GM12878 (cell line): ENCODE measurements at regions of chr17 and their contacts with region 1.

Region 1: GRCh38 chr17:40474419-40475002 is 26.9 kb downstream of the TNS4 start:
- DNase-seq: no peak
- ATAC-seq: no peak
- H3K4me3 ChIP-seq: no peak overlapping the region
- H3K27ac ChIP-seq: no peak overlapping the region
- H3K4me1 ChIP-seq: no peaks in the 10 kb centered on the region
- H3K27me3 ChIP-seq: no peaks in the 10 kb centered on the region
- CTCF ChIP-seq: no peak
- EP300 ChIP-seq: no peak
- POLR2A ChIP-seq: no peak
- RAD21 ChIP-seq: no peak

Region 2: DNA sequence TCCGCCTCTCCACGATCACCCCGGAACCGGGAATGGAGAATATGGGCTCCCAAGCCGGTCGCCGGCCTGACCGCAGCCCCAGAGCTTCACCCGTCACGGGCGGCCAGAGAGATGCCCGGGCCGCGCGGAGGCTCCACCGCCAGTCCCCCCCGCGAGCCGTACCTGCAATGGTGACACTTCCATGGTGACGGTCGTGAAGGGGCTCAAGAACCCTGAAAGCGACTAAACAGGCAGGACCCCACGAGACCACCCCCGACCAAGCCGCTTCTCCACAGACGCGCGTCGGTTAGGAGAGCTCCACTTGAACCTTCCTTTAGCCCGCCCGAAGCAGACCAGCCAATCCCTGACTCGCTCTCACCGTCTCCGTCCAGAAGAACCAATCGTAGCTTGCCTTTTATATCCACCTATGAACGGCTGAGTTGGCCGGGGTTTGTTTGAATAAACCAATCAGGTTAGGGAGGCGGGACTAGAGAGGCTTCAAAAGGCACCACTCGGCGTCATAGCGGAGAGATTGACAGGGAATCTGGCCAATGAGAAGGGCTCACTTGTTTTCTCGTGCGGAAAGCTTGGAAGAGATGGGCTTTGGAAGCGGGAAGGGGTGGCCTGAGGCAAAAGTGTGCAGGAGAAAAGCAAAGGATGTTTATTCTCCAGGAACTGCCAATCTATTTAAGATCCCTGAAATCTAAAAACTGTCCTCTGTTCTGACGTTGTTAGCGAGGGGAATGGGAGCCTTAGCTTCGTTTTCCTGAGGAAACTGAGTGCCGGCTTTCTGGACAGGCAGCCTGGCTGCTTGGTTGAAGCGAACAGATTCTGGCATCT is 56.7 kb before region 1 on chr17 and contains the start of gene TOP2A:
- CTCF ChIA-PET with region 1: interaction called, 31 read pairs
- POLR2A ChIA-PET with region 1: no interaction called
- RAD21 ChIA-PET with region 1: interaction called, 7 read pairs
- SMC1A ChIA-PET with region 1: interaction called, 4 read pairs
- in situ Hi-C with region 1: no loop called
- intact Hi-C with region 1: no loop called
- DNase-seq: peak; percentile 99
- ATAC-seq: peak; percentile 97
- H3K4me3 ChIP-seq: peak within 1 kb of the TSS; percentile 94
- H3K27ac ChIP-seq: peak within 1 kb of the TSS; percentile 62
- H3K4me1 ChIP-seq: no peaks in the 10 kb centered on the region; the same call in 1 of the 2 replicates
- H3K27me3 ChIP-seq: no peaks in the 10 kb centered on the region; a peak in 1 of 4 replicates
- CTCF ChIP-seq: no peak
- EP300 ChIP-seq: no peak
- POLR2A ChIP-seq: peak; percentile 91
- RAD21 ChIP-seq: no peak
- polyA plus RNA-seq, gene TOP2A: 149 to 236 TPM

Region 3: DNA sequence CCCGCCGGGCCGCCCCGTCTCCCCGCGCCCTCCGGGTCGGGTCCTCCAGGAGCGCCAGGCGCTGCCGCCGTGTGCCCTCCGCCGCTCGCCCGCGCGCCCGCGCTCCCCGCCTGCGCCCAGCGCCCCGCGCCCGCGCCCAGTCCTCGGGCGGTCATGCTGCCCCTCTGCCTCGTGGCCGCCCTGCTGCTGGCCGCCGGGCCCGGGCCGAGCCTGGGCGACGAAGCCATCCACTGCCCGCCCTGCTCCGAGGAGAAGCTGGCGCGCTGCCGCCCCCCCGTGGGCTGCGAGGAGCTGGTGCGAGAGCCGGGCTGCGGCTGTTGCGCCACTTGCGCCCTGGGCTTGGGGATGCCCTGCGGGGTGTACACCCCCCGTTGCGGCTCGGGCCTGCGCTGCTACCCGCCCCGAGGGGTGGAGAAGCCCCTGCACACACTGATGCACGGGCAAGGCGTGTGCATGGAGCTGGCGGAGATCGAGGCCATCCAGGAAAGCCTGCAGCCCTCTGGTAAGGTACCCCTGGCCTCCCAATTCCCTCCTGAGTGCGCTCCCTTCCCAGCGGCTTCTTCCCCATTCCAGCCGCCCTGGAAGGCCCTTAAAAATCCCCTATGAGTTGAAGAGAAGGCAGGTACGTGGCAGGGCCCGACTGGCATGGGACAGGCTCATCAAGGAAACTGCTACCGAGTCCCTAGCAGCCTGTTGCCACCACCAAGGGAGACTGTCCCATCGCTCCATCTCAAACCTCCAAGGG is 30.8 kb before region 1 on chr17:
- CTCF ChIA-PET with region 1: interaction called, 61 read pairs
- POLR2A ChIA-PET with region 1: interaction called, 5 read pairs
- RAD21 ChIA-PET with region 1: interaction called, 13 read pairs
- SMC1A ChIA-PET with region 1: interaction called, 14 read pairs
- in situ Hi-C with region 1: no loop called
- intact Hi-C with region 1: no loop called
- DNase-seq: no peak
- ATAC-seq: peak; percentile 84
- H3K4me3 ChIP-seq: peak overlapping the region; percentile 61
- H3K27ac ChIP-seq: no peak overlapping the region
- H3K4me1 ChIP-seq: peaks cover 19% of the 10 kb centered on the region
- H3K27me3 ChIP-seq: peaks cover 0 to 16% of the 10 kb centered on the region in 2 experiments; a peak in 1 of 4 replicates
- CTCF ChIP-seq: peak; percentile 46 to 72 (median 71)
- EP300 ChIP-seq: no peak
- POLR2A ChIP-seq: no peak
- RAD21 ChIP-seq: peak; percentile 33; the same call in 1 of the 2 replicates

Region 4: DNA sequence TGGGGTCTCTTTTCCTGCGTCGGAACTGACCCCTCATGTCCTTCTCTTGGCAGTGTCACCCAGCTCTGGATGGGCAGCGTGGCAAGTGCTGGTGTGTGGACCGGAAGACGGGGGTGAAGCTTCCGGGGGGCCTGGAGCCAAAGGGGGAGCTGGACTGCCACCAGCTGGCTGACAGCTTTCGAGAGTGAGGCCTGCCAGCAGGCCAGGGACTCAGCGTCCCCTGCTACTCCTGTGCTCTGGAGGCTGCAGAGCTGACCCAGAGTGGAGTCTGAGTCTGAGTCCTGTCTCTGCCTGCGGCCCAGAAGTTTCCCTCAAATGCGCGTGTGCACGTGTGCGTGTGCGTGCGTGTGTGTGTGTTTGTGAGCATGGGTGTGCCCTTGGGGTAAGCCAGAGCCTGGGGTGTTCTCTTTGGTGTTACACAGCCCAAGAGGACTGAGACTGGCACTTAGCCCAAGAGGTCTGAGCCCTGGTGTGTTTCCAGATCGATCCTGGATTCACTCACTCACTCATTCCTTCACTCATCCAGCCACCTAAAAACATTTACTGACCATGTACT is 18.0 kb before region 1 on chr17:
- CTCF ChIA-PET with region 1: interaction called, 15 read pairs
- POLR2A ChIA-PET with region 1: no interaction called
- RAD21 ChIA-PET with region 1: interaction called, 3 read pairs
- SMC1A ChIA-PET with region 1: interaction called, 3 read pairs
- in situ Hi-C with region 1: no loop called
- intact Hi-C with region 1: no loop called
- DNase-seq: no peak
- ATAC-seq: no peak
- H3K4me3 ChIP-seq: no peak overlapping the region
- H3K27ac ChIP-seq: no peak overlapping the region
- H3K4me1 ChIP-seq: no peaks in the 10 kb centered on the region
- H3K27me3 ChIP-seq: no peaks in the 10 kb centered on the region
- CTCF ChIP-seq: no peak
- EP300 ChIP-seq: no peak
- POLR2A ChIP-seq: no peak
- RAD21 ChIP-seq: no peak

Region 5: GRCh38 chr17:40516581-40517285 is 42.2 kb after region 1 on chr17:
- CTCF ChIA-PET with region 1: interaction called, 38 read pairs
- POLR2A ChIA-PET with region 1: interaction called, 6 read pairs
- RAD21 ChIA-PET with region 1: interaction called, 17 read pairs
- SMC1A ChIA-PET with region 1: interaction called, 14 read pairs
- in situ Hi-C with region 1: no loop called
- intact Hi-C with region 1: no loop called
- DNase-seq: peak; percentile 60
- ATAC-seq: peak; percentile 91
- H3K4me3 ChIP-seq: peak overlapping the region; percentile 38; the same call in 1 of the 2 replicates
- H3K27ac ChIP-seq: peak overlapping the region; percentile 64
- H3K4me1 ChIP-seq: peaks cover 18% of the 10 kb centered on the region
- H3K27me3 ChIP-seq: no peaks in the 10 kb centered on the region; a peak in 1 of 4 replicates
- CTCF ChIP-seq: no peak
- EP300 ChIP-seq: peak; percentile 44 to 60; a peak in 3 of 4 replicates
- POLR2A ChIP-seq: no peak
- RAD21 ChIP-seq: no peak

Region 6: GRCh38 chr17:40707720-40708119 is 233.2 kb after region 1 on chr17:
- CTCF ChIA-PET with region 1: no interaction called
- POLR2A ChIA-PET with region 1: no interaction called
- RAD21 ChIA-PET with region 1: no interaction called
- SMC1A ChIA-PET with region 1: no interaction called
- in situ Hi-C with region 1: no loop called
- intact Hi-C with region 1: no loop called
- DNase-seq: no peak
- ATAC-seq: no peak
- H3K4me3 ChIP-seq: no peak overlapping the region
- H3K27ac ChIP-seq: no peak overlapping the region
- H3K4me1 ChIP-seq: no peaks in the 10 kb centered on the region
- H3K27me3 ChIP-seq: peaks cover 0 to 2% of the 10 kb centered on the region in 2 experiments; a peak in 1 of 4 replicates
- CTCF ChIP-seq: no peak
- EP300 ChIP-seq: no peak
- POLR2A ChIP-seq: no peak
- RAD21 ChIP-seq: no peak